ENCODE measurements at regions of chr13 and their contacts with region 1.

Region 1: GRCh38 chr13:36736119-36736726 is 62.4 kb downstream of the SERTM1 start:
- DNase-seq: peak; percentile 19
- H3K4me3 ChIP-seq: no peak overlapping the region
- H3K27ac ChIP-seq: no peak overlapping the region
- H3K4me1 ChIP-seq: no peaks in the 10 kb centered on the region
- H3K27me3 ChIP-seq: no peaks in the 10 kb centered on the region
- CTCF ChIP-seq: peak; percentile 60 to 74 (median 67)
- EP300 ChIP-seq: no peak
- POLR2A ChIP-seq: no peak

Region 2: DNA sequence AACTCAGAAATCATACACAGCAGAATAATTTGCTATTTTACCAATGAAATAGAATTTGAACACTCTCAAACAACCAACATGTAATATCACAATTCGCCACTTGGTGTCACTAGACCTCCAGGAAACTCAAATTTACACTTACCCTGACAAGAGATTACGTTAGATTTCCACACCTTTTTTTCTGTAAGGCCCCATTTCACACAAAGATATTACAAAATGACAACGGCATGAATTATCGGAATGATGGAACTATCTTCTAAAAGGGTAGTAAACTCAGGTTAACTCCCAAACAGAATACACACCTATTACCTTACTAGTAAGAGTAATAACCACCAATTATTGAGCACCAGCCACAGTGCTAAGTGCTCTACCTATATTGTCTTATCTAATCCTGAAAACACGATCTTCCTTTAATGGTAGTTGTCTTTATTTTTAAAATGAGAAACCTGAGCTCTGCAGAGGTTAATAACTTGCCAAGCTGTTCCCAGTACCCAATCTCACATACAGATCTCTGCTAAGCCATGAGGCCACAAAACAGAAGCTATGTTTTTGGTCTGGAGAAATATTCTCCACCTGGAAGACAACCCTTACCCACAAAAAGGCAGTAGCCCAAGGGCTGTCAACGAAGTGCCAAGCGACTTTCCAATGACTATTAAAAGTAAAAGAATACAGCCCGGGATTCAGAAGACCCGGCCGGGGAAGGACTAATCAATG is 757.5 kb before region 1 on chr13:
- in situ Hi-C with region 1: loop called in 2 of 4 experiments (anchors 25 kb)
- intact Hi-C with region 1: loop called (anchors 5 kb)
- DNase-seq: no peak
- H3K4me3 ChIP-seq: no peak overlapping the region
- H3K27ac ChIP-seq: peak overlapping the region; percentile 49 to 76 (median 60)
- H3K4me1 ChIP-seq: no peaks in the 10 kb centered on the region
- H3K27me3 ChIP-seq: no peaks in the 10 kb centered on the region
- CTCF ChIP-seq: peak; percentile 73 to 82 (median 77)
- EP300 ChIP-seq: no peak
- POLR2A ChIP-seq: no peak

Region 3: DNA sequence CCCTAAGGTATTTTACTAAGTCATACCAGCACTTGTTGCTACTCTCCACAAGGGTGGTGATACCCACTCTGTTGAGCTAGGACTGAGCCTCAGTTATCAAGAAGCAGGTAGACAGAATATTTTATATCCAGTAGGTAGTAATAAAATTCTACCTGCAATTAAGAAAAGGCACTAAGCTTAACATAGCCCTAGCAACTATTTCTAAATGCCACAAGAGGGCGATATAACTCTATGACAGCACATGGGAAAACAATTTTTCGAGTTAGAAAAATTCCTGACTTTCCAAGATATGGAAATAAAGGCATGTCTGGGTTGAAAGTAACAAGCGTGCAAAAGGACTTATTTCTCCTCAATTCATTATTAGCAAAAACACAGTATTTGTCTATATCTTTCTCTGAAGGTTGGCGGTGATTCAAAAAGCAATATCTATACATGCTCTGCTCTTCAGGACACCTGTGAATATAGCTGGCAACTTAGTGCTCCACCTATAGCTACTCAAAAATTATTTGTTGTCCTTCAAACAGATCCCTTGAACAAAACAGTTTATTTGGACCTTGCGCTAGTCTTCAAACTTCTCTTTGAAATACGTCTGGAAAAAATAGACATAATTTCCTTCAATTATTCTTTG is 453.3 kb before region 1 on chr13:
- in situ Hi-C with region 1: loop called in 1 of 4 experiments (anchors 25 kb)
- intact Hi-C with region 1: loop called (anchors 10 kb)
- DNase-seq: no peak
- H3K4me3 ChIP-seq: no peak overlapping the region
- H3K27ac ChIP-seq: no peak overlapping the region
- H3K4me1 ChIP-seq: peaks cover 0 to 3% (median 0%) of the 10 kb centered on the region in 4 donors
- H3K27me3 ChIP-seq: no peaks in the 10 kb centered on the region
- CTCF ChIP-seq: peak; percentile 46 to 78 (median 73)
- EP300 ChIP-seq: no peak
- POLR2A ChIP-seq: no peak

Region 4: GRCh38 chr13:36357692-36358091 is 378.5 kb before region 1 on chr13:
- in situ Hi-C with region 1: no loop called
- intact Hi-C with region 1: loop called (anchors 10 kb)
- DNase-seq: no peak
- H3K4me3 ChIP-seq: no peak overlapping the region
- H3K27ac ChIP-seq: peak overlapping the region in 2 of 4 donors; percentile 46 to 61
- H3K4me1 ChIP-seq: peaks cover 0 to 6% (median 0%) of the 10 kb centered on the region in 4 donors
- H3K27me3 ChIP-seq: no peaks in the 10 kb centered on the region
- CTCF ChIP-seq: no peak
- EP300 ChIP-seq: no peak
- POLR2A ChIP-seq: no peak

Region 5: GRCh38 chr13:36431654-36432511 is 304.3 kb before region 1 on chr13 and contains the start of gene CCNA1:
- in situ Hi-C with region 1: loop called in 1 of 4 experiments (anchors 25 kb)
- intact Hi-C with region 1: loop called (anchors 10 kb)
- DNase-seq: no peak
- H3K4me3 ChIP-seq: peak within 1 kb of the TSS; percentile 14 to 55 (median 25)
- H3K27ac ChIP-seq: no peak within 1 kb of the TSS
- H3K4me1 ChIP-seq: peaks cover 0 to 21% (median 9%) of the 10 kb centered on the region in 4 donors
- H3K27me3 ChIP-seq: peaks cover 44% of the 10 kb centered on the region
- CTCF ChIP-seq: no peak
- EP300 ChIP-seq: no peak
- POLR2A ChIP-seq: no peak
- total RNA-seq, gene CCNA1: not detected

Measured in transverse colon (tissue), 4 donors.